ENCODE measurements at regions of chr11 and their contacts with region 1.

Region 1: GRCh38 chr11:120229451-120230424 is 10.2 kb upstream of the POU2F3 start:
- DNase-seq: no peak
- ATAC-seq: peak; percentile 59
- H3K4me3 ChIP-seq: no peak overlapping the region
- H3K27ac ChIP-seq: no peak overlapping the region
- H3K4me1 ChIP-seq: peaks cover 7% of the 10 kb centered on the region
- H3K27me3 ChIP-seq: peaks cover 5 to 8% of the 10 kb centered on the region in 2 experiments
- CTCF ChIP-seq: peak; percentile 62 to 74 (median 66)
- EP300 ChIP-seq: no peak
- POLR2A ChIP-seq: no peak
- RAD21 ChIP-seq: peak; percentile 71

Region 2: DNA sequence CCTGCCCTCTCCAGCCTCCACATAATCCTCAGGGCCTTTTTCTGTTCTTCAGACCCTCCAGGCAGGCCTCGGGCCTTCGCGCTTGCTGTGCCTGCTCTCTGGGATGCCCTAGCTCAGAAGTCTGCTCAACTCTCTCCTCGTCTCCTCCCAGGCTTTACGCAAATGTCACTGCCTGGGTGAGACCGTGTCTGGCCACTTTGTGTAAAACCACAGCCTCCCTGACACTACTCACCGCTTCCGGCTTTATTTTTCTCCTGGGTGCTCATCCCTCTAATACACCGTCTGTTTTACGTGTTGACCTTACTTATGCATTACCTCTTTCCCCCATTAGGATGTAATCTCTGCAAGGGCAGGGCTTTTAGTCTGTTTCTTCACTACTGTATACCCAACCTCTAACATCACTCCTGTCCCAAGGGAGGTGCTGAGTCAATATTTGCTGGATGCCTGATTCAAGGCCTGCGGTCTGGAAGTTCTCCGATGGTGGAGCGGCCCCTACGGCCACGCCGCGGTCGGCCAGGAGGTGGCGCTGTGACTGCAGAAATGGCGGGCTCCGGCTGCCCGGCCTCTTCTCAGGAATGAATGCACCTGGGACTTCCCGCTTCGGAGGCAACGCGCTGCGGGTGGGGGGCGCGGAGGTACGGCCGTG is 748.6 kb before region 1 on chr11:
- CTCF ChIA-PET with region 1: interaction called, 6 read pairs
- POLR2A ChIA-PET with region 1: no interaction called
- RAD21 ChIA-PET with region 1: no interaction called
- SMC1A ChIA-PET with region 1: no interaction called
- in situ Hi-C with region 1: no loop called
- intact Hi-C with region 1: loop called (anchors 10 kb)
- DNase-seq: peak; percentile 31
- ATAC-seq: peak; percentile 89
- H3K4me3 ChIP-seq: no peak overlapping the region
- H3K27ac ChIP-seq: no peak overlapping the region
- H3K4me1 ChIP-seq: no peaks in the 10 kb centered on the region
- H3K27me3 ChIP-seq: no peaks in the 10 kb centered on the region; a peak in 1 of 4 replicates
- CTCF ChIP-seq: peak; percentile 91 to 99 (median 97)
- EP300 ChIP-seq: no peak
- POLR2A ChIP-seq: no peak
- RAD21 ChIP-seq: peak; percentile 93

Region 3: DNA sequence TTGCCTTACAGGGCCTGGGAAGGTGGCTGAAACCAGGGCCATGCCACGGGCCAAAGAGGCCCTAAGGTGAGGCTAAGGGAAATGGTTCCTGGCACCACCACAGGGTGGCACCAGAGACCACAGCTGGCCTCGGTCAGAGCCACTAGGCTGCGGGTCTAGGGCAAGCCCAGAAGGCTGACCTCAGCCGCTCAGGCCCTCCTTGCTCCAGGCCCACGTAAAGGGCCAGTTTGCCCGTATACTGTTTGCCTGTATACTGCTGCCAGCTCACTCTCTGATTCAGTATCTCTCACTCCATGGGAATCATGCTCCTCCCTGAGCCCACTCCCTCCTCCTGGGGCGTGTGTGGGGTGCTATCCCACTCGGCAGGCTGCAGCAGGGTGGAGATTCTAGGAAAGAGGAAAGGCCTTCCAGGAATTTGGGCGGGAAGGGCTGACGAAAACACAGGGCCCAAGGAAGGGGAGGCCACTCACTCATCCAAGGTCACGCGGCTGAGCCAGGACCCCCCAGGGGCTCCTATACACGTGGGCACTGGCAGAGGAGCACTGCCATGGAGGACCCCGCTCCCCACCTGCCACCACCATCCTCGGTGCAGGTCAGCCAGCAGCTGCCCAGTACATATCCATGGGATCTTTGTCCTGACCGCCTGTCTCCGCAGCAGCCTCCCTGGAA is 563.1 kb before region 1 on chr11:
- CTCF ChIA-PET with region 1: no interaction called
- POLR2A ChIA-PET with region 1: no interaction called
- RAD21 ChIA-PET with region 1: no interaction called
- SMC1A ChIA-PET with region 1: no interaction called
- in situ Hi-C with region 1: no loop called
- intact Hi-C with region 1: loop called (anchors 5 kb)
- DNase-seq: no peak
- ATAC-seq: peak; percentile 100
- H3K4me3 ChIP-seq: no peak overlapping the region
- H3K27ac ChIP-seq: no peak overlapping the region
- H3K4me1 ChIP-seq: no peaks in the 10 kb centered on the region
- H3K27me3 ChIP-seq: no peaks in the 10 kb centered on the region
- CTCF ChIP-seq: peak; percentile 91 to 98 (median 94); a peak in 5 of 6 replicates
- EP300 ChIP-seq: no peak
- POLR2A ChIP-seq: no peak
- RAD21 ChIP-seq: peak; percentile 95

Region 4: DNA sequence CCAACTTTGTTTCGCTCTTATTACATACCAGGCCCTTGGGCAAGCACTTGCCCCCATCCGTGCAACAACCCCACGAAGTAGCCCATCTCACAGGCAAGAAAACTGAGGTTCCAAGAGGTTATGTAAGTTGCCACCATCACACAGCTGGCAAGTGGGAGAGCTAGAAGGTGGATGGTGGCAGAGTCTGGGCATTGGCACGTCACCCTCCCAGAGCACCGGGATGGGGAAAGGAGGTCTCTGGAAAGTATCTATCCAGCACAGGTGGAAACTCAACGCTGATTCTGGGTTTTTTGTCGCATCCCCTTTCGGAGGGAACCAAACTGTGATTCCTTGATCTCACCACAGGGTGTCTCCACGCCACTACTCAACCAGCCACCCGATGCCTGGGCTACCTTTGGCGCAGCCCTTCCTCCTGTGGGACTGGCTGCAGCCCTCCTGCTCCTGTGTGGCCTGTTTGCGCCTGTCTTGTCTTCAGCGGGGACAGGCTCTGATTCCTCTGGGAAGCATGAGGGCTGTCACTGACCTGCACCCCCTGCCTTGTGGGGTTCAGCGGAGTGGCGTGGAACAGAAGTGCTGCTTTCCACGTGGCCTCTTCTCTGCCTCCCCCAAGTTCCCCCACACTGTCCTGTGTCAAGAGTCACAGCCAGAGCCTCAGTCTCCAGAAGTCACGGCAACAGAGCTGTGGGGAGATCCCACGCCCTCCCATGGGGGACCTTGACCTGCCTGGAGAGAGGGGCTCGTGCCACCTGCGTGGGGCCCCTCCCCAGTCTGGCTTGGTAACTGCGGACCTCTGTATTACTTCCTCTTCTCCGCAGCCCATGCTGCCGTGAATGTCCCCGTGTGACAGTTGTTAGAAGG is 57.5 kb before region 1 on chr11:
- CTCF ChIA-PET with region 1: interaction called, 17 read pairs
- POLR2A ChIA-PET with region 1: no interaction called
- RAD21 ChIA-PET with region 1: interaction called, 6 read pairs
- SMC1A ChIA-PET with region 1: interaction called, 10 read pairs
- in situ Hi-C with region 1: loop called (anchors 5 kb)
- intact Hi-C with region 1: loop called (anchors 1 kb)
- DNase-seq: no peak
- ATAC-seq: peak; percentile 92
- H3K4me3 ChIP-seq: no peak overlapping the region
- H3K27ac ChIP-seq: no peak overlapping the region
- H3K4me1 ChIP-seq: no peaks in the 10 kb centered on the region
- H3K27me3 ChIP-seq: peaks cover 14% of the 10 kb centered on the region in 2 experiments
- CTCF ChIP-seq: peak; percentile 80 to 91 (median 84)
- EP300 ChIP-seq: no peak
- POLR2A ChIP-seq: no peak
- RAD21 ChIP-seq: peak; percentile 83

Region 5: DNA sequence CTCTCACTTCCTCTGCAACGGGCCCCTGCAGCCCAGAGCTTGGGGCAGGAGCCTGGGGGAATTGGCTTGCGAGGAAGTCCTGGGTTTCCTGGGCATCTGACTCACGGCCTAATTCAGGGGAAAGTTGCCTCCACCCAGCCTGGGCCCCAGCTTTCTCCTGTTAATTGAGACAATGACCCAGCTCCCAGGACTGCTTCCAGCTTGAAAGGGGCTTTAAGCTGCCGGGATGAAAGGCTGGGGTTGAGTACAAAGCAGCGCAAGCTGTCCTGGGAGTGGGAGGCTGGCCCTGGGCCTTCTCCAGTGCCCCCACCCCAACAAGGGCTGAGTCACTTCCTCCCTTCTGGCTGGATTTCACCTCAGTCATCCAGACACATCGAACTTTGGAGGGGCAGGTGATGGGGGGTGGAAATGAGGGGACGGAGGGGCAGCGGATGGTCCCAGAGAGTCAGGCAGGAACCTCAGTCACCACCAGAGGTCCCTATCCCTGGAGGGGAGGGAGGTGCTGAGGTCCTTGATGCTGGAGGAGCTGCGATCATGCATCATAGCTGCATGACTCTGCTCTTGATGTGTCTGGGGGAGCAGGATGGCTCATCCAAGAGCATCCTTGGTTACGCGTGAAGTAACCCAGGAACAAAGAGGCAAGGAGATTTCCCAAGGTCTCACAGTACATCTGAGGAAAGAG is 49.0 kb before region 1 on chr11:
- CTCF ChIA-PET with region 1: interaction called, 12 read pairs
- POLR2A ChIA-PET with region 1: no interaction called
- RAD21 ChIA-PET with region 1: interaction called, 5 read pairs
- SMC1A ChIA-PET with region 1: interaction called, 3 read pairs
- in situ Hi-C with region 1: no loop called
- intact Hi-C with region 1: no loop called
- DNase-seq: no peak
- ATAC-seq: no peak
- H3K4me3 ChIP-seq: no peak overlapping the region
- H3K27ac ChIP-seq: no peak overlapping the region
- H3K4me1 ChIP-seq: no peaks in the 10 kb centered on the region
- H3K27me3 ChIP-seq: peaks cover 3 to 6% of the 10 kb centered on the region in 2 experiments; a peak in 2 of 4 replicates
- CTCF ChIP-seq: no peak
- EP300 ChIP-seq: no peak
- POLR2A ChIP-seq: no peak
- RAD21 ChIP-seq: no peak

Measured in GM12878 (cell line).